Posterior vena cava (tissue), 2 donors: ENCODE measurements at regions of chr11 and their contacts with region 1.

Region 1: DNA sequence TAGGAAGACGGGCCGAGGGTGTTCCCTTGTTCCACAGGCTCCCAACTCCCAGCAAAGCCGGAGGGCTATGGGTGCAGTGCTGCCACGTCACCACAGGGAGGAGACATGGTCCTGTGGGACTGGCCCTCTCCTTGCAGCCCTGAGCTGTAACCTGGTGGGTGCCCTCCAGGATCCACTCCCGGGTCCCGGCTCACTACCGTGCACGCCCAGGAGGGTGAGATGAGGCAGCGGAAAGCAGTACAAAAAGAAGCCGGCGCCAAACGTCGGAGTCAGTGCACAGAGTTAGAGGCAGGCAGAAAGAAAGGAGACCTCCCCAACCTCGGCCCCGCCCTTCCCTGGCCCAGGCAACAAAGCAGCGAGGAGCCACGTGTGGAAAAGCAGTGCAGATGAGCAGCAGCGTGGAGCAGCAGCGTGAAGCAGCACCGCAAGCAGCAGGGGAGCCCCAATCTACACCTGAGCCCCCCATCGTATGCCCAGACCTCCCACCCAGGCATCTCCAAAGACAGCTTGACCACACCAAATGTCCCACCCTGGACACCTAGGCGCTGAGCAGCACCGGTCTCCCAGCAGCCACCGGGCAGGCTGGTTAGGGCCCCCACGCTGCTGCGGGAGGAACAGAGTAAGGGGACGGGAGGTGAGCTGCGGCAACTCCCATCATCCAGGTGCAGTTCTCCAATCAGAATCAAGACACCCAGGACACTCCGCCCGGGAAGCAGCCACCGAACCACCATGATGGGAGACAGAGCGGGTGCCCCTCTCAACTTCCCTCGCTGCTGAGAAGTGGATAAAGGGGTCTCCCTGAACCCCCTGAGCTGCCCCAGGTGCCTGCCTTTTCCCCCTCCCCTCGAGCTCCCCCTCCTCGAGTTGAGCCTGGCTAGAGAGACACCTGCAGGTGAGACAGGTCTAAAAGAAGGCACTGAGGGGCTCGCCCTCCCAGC is 28.8 kb downstream of the IGSF9B start:
- DNase-seq: peak; percentile 90

Region 2: DNA sequence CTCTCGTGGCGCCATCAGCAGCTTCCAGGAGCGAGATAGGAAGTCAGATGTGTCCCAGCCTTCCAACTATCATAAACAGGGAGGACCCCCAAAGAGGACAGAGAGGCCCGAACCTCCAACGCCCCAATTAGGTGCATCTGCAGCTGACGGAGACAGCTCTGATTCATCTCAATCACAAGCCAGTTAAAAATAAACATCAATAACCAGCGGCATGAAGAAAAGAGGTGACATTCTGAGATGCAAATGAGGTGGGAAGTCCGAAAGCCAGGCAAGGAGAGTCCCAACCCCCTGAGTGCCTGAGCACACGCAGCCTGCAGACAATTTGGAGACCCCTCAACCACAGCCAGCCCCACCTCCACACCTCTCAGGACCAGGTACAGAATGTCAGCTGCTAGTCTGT is 56.9 kb after region 1 on chr11:
- intact Hi-C with region 1: loop called in 1 of 2 experiments (anchors 2 kb)
- DNase-seq: no peak

Region 3: DNA sequence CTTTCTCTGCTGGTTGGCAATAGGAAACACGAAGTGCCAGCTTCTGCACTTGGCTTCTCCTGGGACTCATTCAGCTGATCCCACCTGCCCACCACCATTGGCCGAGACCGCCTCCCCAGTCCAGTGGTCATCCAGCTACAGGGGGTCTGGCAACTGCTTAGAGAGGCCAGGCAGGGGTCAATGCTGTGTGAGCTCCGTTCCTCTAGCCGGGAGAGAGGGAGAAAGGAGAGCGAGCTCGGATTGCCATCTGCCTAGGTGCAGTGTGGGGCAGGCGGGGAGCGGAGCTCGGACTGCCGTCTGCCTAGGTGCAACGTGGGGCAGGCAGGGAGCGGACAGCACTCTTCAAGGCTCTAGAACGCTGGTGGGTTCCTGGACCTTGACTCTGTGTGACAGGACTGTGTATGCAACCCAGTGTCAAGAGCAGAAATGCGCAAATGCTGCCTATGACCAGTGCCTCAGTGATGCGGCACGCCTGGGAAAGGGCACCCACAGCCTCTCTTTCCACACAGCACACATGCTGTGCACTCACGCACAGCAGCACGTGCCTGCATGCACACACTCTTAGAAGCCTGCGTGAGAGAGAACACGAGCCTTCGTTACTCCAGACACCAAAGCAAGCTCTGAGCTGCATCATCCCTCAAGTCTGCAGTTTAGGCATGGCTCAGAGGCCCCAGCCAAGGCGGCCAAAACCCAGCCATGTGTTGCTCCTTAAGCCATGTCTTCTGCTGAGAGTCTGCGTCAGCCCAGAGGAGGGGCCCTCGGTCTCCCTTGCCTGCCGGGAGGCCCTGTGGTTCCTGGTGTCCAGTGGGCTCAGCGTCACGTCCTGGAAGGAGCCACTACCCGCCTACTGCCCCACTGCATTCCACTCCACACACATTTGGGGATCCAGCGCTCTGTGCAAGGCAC is 114.1 kb after region 1 on chr11:
- intact Hi-C with region 1: loop called in 1 of 2 experiments (anchors 2 kb)
- DNase-seq: peak; percentile 78

Region 4: GRCh38 chr11:134409552-134410429 is 481.8 kb after region 1 on chr11:
- intact Hi-C with region 1: loop called in 1 of 2 experiments (anchors 2 kb)
- DNase-seq: no peak